ENCODE measurements at regions of chr1 and their contacts with region 1.

Region 1: DNA sequence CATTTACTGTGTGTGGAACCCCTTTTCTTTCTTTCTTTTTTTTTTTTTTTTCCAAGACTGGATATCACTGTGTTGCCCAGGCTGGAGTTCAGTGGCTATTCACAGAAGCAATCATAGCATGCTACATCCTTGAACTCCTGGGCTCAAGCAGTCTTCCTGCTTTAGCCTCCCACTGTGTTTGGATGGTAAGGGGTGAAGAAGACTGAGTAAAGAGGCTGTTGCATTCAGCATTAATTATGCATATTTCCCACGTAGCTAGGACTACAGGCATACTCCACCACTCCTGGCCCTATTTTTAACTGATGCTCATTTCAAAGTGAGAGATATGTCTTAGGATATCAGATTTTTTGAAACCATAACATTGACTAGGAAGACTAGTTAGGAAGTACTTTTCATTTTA is 39.5 kb downstream of the PHACTR4 start:
- DNase-seq: no peak
- ATAC-seq: no peak
- H3K4me3 ChIP-seq: no peak overlapping the region
- H3K27ac ChIP-seq: no peak overlapping the region
- H3K4me1 ChIP-seq: peaks cover 0 to 14% (median 0%) of the 10 kb centered on the region in 9 donors
- H3K27me3 ChIP-seq: no peaks in the 10 kb centered on the region
- CTCF ChIP-seq: no peak

Region 2: GRCh38 chr1:28470146-28470545 is 61.1 kb after region 1 on chr1:
- intact Hi-C with region 1: loop called in 7 of 10 experiments (anchors 2 to 10 kb)
- DNase-seq: no peak
- ATAC-seq: no peak
- H3K4me3 ChIP-seq: no peak overlapping the region
- H3K27ac ChIP-seq: no peak overlapping the region
- H3K4me1 ChIP-seq: peaks cover 0 to 7% (median 0%) of the 10 kb centered on the region in 9 donors
- H3K27me3 ChIP-seq: no peaks in the 10 kb centered on the region
- CTCF ChIP-seq: no peak